Activated CD4-positive, alpha-beta memory T cell treated with anti-CD3 and anti-CD28 coated beads for 36 hours (primary cell): ENCODE measurements at regions of chr2 and their contacts with region 1.

Region 1: GRCh38 chr2:201432038-201432620 is 19.1 kb downstream of the TRAK2 start:
- DNase-seq: no peak
- H3K4me3 Mint-ChIP-seq: peak overlapping the region; percentile 51
- H3K27ac Mint-ChIP-seq: peak overlapping the region; percentile 93
- H3K4me1 Mint-ChIP-seq: peaks cover 46% of the 10 kb centered on the region
- H3K27me3 Mint-ChIP-seq: no peaks in the 10 kb centered on the region

Region 2: DNA sequence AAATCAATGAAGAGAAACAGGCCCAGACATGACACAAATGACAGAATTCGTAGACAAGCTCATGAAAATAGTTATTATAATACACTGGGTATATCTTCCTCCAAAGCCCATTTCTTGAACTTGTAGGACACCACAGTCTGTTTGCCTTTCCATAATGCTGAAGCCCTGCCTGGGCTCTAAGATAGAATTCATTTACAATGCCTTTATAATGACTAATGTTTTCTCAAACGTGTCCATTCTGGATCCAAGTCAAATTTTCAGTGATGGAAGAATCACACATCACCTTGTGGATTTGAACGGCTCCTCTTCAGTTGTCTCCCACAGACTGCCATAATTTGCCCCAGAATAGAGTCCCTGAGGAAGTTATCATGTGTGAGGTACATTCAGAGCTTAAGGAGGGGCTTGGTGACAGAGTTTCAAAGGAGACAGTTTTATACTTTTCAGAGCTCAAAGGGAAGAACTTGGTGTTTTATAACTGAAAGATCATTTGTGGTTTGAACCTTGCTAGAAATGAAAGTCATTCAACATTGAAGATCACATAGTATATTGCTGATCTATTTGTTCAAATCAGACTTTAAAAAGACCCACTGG is 133.6 kb before region 1 on chr2:
- CTCF ChIA-PET with region 1: no interaction called
- POLR2A ChIA-PET with region 1: no interaction called
- intact Hi-C with region 1: no loop called
- DNase-seq: no peak
- H3K4me3 Mint-ChIP-seq: no peak overlapping the region
- H3K27ac Mint-ChIP-seq: no peak overlapping the region
- H3K4me1 Mint-ChIP-seq: no peaks in the 10 kb centered on the region
- H3K27me3 Mint-ChIP-seq: no peaks in the 10 kb centered on the region

Region 3: DNA sequence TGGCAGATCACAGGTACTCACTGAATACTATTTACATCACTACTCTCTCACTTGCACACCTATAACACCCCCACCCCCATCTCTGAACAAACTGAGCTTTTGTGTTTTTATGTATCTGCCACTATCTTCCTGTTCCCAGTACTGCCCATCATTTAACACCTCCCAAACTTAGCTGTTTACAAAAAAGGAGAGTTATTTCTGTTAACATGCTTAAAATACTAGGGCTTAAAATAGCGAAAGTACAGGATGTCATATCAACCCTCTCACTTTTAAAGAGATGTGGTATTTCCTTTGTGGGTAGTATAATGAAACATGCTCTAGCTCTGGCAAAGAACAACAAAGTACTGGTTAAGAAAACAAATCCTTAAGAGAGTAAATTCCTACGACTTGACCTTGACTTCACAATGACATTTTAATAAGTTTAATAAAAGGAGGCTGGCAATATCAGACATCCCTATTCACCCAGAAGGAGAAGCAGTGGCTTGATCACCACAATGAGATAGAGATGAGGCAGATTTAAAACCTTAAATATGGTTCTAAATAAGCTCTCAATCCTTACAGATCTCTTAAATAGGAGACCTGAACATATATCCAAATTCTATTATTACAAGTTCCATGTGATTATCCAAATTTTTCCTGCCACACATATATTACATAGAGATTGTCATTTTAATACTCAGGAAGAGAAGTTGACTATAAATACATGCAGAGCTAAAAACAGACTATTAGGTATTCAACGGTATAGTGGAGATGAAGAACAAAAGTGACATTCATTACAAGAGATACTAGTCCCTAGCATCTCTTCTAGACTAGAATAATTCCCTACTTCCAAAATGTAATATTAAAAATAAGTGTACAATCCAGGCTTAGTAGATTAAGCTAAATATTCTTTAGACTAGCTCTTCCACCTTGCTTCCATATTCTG is 17.8 kb before region 1 on chr2:
- CTCF ChIA-PET with region 1: no interaction called
- POLR2A ChIA-PET with region 1: interaction called, 5 read pairs
- intact Hi-C with region 1: loop called (anchors 2 kb)
- DNase-seq: no peak
- H3K4me3 Mint-ChIP-seq: no peak overlapping the region
- H3K27ac Mint-ChIP-seq: no peak overlapping the region
- H3K4me1 Mint-ChIP-seq: peaks cover 29% of the 10 kb centered on the region
- H3K27me3 Mint-ChIP-seq: no peaks in the 10 kb centered on the region

Region 4: DNA sequence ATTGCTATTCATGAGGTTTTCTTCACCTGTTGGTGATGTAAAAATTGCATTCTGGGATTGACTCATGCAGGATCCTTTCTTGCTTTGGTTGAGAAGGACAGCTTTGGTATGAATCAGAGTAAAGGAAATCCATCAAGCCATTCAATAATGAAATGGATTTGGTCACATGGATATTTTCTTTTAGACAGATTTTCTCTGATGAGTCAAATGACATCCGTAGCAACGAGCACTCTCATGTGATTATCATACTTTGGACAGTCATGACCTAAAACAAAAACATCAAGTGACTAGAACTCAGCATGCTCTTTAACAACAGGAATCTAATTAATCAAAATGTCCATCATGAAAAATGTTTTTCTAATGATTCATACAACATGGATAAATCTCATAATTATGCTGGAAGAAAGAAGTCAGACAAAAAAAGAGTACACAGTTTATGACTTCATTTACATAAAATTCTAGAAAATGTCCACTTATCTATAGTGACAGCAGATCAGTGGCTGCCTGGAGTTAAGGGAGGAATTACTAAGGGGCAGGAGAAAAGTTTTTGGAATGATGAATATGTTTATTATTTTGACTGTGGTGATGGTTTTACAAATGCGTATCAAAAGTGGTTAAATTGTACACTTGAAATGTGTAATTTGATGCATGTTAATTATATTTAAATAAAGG is 11.6 kb before region 1 on chr2:
- CTCF ChIA-PET with region 1: interaction called, 3 read pairs
- POLR2A ChIA-PET with region 1: no interaction called
- intact Hi-C with region 1: loop called (anchors 1 kb)
- DNase-seq: no peak
- H3K4me3 Mint-ChIP-seq: no peak overlapping the region
- H3K27ac Mint-ChIP-seq: peak overlapping the region; percentile 20
- H3K4me1 Mint-ChIP-seq: peaks cover 49% of the 10 kb centered on the region
- H3K27me3 Mint-ChIP-seq: no peaks in the 10 kb centered on the region

Region 5: GRCh38 chr2:201470821-201471731 is 38.9 kb after region 1 on chr2:
- CTCF ChIA-PET with region 1: no interaction called
- POLR2A ChIA-PET with region 1: no interaction called
- intact Hi-C with region 1: no loop called
- DNase-seq: no peak
- H3K4me3 Mint-ChIP-seq: no peak overlapping the region
- H3K27ac Mint-ChIP-seq: no peak overlapping the region
- H3K4me1 Mint-ChIP-seq: peaks cover 3% of the 10 kb centered on the region
- H3K27me3 Mint-ChIP-seq: no peaks in the 10 kb centered on the region

Region 6: DNA sequence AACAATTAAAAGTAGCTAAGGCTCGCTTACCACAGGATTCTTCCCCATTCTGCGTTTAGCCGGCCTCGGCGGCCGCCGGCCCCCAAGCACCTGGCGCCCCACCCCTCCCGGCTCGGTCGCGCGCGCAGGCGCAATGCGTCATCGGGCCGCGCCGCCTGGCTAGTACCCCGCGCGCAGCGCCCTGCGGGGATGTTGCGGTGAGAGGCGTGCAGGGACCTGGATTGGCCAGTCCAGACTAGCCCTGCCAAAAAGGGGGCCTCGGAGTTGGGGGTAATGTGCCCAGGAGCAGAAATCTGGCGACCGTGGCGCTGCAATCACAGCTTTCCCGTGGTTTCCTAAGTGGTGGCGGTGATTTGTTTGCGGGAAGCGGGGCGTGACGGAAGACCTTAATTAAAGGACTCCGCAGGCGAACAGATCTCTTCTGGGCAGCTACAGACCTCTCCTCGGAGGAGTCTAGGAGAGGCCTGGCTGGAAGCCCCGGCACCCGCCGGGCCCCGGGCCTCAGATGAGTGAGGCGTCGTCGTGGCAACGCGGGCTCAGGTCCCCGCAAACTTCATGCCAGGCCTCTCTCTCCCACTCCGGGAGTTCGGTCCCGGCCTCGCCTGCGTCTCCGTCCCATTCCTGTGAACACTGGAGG is 210.6 kb after region 1 on chr2:
- CTCF ChIA-PET with region 1: no interaction called
- POLR2A ChIA-PET with region 1: no interaction called
- intact Hi-C with region 1: no loop called
- DNase-seq: peak; percentile 89
- H3K4me3 Mint-ChIP-seq: peak overlapping the region; percentile 87
- H3K27ac Mint-ChIP-seq: peak overlapping the region; percentile 84
- H3K4me1 Mint-ChIP-seq: peaks cover 10% of the 10 kb centered on the region
- H3K27me3 Mint-ChIP-seq: no peaks in the 10 kb centered on the region